Endothelial cell of umbilical vein (primary cell): ENCODE measurements at regions of chr5 and their contacts with region 1.

Region 1: DNA sequence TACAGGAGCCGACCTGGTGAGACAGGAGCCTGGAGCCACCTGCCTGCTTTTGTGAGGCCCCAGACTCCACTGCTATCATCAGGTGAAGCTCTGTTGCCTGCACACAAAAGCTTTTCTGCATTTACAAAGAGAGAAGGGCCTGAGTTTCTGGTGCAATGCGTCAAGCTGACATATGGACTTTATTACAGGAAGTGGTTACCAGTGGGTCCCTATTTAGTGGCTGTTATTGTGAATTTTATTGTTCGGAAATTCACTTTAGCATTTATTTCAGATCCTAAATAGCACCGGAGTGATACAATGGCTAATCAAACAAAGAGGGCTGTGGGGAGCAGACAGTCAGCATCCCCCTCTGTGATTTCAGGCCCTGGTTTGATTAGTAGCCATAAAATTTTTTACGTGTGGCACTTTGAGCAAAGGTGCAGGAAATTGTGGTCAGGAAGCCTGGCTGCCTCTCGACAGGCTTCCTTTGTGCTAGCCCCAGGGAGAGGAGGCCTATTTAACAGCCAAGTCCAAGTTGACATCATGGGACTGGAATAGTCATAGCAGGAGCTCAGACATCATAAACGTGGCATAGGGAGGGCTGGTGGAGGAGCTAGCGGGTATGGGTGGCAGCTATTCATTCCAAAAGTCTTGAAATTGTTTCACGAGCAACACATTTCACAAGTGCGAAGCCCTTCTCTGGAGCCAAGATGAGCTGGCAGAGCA is 8.4 kb downstream of the TGFBI start:
- DNase-seq: peak; percentile 58
- H3K4me3 ChIP-seq: no peak overlapping the region
- H3K27ac ChIP-seq: peak overlapping the region; percentile 84
- H3K4me1 ChIP-seq: peaks cover 32% of the 10 kb centered on the region
- H3K27me3 ChIP-seq: no peaks in the 10 kb centered on the region
- CTCF ChIP-seq: no peak
- POLR2A ChIP-seq: no peak

Region 2: GRCh38 chr5:136053336-136054141 is 16.4 kb after region 1 on chr5:
- CTCF ChIA-PET with region 1: interaction called, 11 read pairs
- POLR2A ChIA-PET with region 1: no interaction called
- dilution Hi-C with region 1: no loop called
- intact Hi-C with region 1: no loop called
- DNase-seq: peak; percentile 77
- H3K4me3 ChIP-seq: no peak overlapping the region
- H3K27ac ChIP-seq: peak overlapping the region; percentile 84
- H3K4me1 ChIP-seq: peaks cover 36% of the 10 kb centered on the region
- H3K27me3 ChIP-seq: no peaks in the 10 kb centered on the region
- CTCF ChIP-seq: no peak
- POLR2A ChIP-seq: peak; percentile 28